ENCODE measurements at regions of chr3 and their contacts with region 1.

Region 1: DNA sequence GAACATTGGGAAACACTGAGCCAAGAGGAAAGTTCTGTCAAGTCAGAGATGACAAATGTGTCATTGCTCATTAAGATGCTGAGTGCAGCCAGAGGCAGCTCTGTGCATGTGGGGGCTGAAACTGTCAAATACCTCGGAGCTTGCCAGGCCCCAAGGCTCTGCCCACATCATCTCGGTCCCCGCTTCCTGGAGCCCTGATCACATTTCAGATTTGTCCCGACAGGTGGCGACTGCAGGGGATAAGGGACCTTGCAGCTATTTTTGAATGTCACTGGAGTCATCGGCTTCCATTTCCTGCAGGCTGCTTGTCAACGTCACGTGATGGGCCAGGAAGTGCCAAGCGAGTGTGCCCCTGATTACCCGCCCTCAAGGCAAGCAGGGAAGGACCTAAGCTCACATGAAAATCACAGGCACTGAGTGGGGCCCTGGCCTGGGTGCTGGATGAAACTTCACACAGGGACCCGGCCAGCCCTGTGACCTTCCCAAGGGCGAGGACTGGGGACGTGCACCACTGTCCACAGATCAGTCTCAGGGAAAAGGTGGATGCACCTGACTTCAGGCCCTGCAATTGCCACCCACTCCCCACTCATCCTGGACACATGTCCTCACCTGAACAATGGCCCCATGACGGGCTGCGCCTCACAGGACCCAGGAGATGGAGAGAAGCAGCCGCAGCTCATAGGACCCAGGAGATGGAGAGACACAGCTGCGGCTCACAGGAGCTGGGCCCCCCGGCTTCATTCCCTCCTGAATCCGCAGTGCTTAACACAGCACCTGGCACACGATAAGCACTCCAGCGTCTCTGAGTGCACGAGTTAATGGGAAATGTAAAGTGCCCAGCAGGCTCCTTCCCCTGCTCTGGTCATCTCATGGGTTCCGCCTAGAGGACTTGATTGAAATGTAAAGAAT is 73.4 kb downstream of the NUP210 start:
- DNase-seq: peak; percentile 78 to 88 (median 82)
- H3K4me3 ChIP-seq: no peak overlapping the region
- H3K4me3 Mint-ChIP-seq: peak overlapping the region in 7 of 8 donors; percentile 48 to 72 (median 63)
- H3K27ac ChIP-seq: peak overlapping the region; percentile 47
- H3K27ac Mint-ChIP-seq: peak overlapping the region; percentile 88 to 94 (median 90)
- H3K4me1 ChIP-seq: peaks cover 46% of the 10 kb centered on the region
- H3K4me1 Mint-ChIP-seq: peaks cover 34 to 56% (median 41%) of the 10 kb centered on the region in 4 donors
- H3K27me3 ChIP-seq: no peaks in the 10 kb centered on the region
- H3K27me3 Mint-ChIP-seq: no peaks in the 10 kb centered on the region

Region 2: DNA sequence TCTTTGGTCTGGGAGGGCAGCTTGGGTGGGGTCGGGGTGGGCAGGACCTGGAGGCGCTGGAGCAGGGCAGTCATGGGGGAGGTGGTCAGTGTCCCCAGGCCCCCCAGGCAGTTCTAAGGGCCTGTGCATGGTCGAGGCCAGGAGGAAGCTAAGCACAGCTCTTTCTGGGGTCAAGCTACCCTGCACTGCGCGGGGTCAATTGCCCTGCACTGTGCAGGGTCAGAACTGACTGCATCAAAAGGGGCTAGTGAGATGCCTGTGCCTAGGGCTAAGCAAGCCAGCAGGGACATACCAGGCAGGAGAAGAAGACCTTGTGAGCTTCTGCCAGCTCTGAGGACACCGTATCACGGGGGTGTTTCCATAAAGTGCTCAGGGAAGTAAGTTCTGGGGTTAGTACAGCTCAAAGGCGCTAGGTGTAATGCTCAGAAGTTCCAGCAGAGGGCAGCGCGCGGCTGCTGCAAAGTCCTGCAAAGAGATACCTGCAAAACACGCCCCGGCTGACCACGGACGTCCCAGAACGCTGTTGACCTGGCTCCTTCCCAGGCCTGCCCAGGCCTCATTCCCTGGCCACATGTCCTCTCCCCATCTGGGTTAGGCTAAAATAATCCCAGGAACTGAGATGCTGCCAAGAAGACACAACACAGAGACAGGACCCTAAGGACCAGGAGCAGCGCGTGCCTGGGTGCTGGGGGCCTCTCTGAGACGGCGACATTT is 254.7 kb before region 1 on chr3:
- CTCF ChIA-PET with region 1: interaction called, 9 read pairs
- POLR2A ChIA-PET with region 1: no interaction called
- intact Hi-C with region 1: loop called (anchors 1 kb)
- DNase-seq: peak; percentile 67 to 77 (median 71)
- H3K4me3 ChIP-seq: no peak overlapping the region
- H3K4me3 Mint-ChIP-seq: peak overlapping the region in 1 of 8 donors; percentile 60
- H3K27ac ChIP-seq: no peak overlapping the region
- H3K27ac Mint-ChIP-seq: no peak overlapping the region
- H3K4me1 ChIP-seq: peaks cover 6% of the 10 kb centered on the region
- H3K4me1 Mint-ChIP-seq: peaks cover 4 to 6% (median 5%) of the 10 kb centered on the region in 4 donors
- H3K27me3 ChIP-seq: no peaks in the 10 kb centered on the region
- H3K27me3 Mint-ChIP-seq: peaks cover 3 to 9% of the 10 kb centered on the region in 2 donors

Region 3: DNA sequence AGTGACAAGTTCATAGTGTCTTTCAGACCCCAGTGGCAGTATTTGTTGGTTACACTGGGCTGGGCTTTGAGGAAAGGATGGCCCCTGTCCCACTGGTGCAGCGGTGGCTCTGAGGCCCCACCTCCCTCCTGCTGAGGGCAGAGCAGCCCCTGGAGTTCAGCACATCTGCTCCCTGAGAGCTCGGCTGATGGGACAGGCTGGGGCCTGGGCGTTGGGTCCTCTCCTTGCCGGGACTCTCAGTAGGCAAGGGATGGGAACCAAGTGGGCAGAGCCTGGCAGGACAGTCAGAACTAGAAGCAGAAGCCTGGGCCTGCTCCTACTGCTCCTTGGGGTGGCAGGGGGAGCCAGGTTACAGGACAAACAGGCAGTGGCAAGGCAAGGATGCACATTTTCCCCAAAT is 41.1 kb before region 1 on chr3:
- CTCF ChIA-PET with region 1: no interaction called
- POLR2A ChIA-PET with region 1: no interaction called
- intact Hi-C with region 1: no loop called
- DNase-seq: no peak
- H3K4me3 ChIP-seq: no peak overlapping the region
- H3K4me3 Mint-ChIP-seq: no peak overlapping the region
- H3K27ac ChIP-seq: no peak overlapping the region
- H3K27ac Mint-ChIP-seq: peak overlapping the region in 1 of 7 donors; percentile 72
- H3K4me1 ChIP-seq: no peaks in the 10 kb centered on the region
- H3K4me1 Mint-ChIP-seq: peaks cover 5 to 6% (median 6%) of the 10 kb centered on the region in 4 donors
- H3K27me3 ChIP-seq: no peaks in the 10 kb centered on the region
- H3K27me3 Mint-ChIP-seq: peaks cover 2 to 3% of the 10 kb centered on the region in 2 donors

Region 4: GRCh38 chr3:13372126-13372525 is 25.4 kb after region 1 on chr3:
- CTCF ChIA-PET with region 1: no interaction called
- POLR2A ChIA-PET with region 1: no interaction called
- intact Hi-C with region 1: no loop called
- DNase-seq: no peak
- H3K4me3 ChIP-seq: no peak overlapping the region
- H3K4me3 Mint-ChIP-seq: no peak overlapping the region
- H3K27ac ChIP-seq: no peak overlapping the region
- H3K27ac Mint-ChIP-seq: peak overlapping the region in 6 of 7 donors; percentile 13 to 77 (median 46)
- H3K4me1 ChIP-seq: no peaks in the 10 kb centered on the region
- H3K4me1 Mint-ChIP-seq: peaks cover 0 to 2% (median under 1%) of the 10 kb centered on the region in 4 donors
- H3K27me3 ChIP-seq: no peaks in the 10 kb centered on the region
- H3K27me3 Mint-ChIP-seq: no peaks in the 10 kb centered on the region

Region 5: GRCh38 chr3:13385373-13385965 is 38.7 kb after region 1 on chr3:
- CTCF ChIA-PET with region 1: interaction called, 19 read pairs
- POLR2A ChIA-PET with region 1: no interaction called
- intact Hi-C with region 1: loop called (anchors 5 kb)
- DNase-seq: no peak
- H3K4me3 ChIP-seq: no peak overlapping the region
- H3K4me3 Mint-ChIP-seq: peak overlapping the region in 2 of 8 donors; percentile 5 to 29
- H3K27ac ChIP-seq: no peak overlapping the region
- H3K27ac Mint-ChIP-seq: peak overlapping the region in 6 of 7 donors; percentile 1 to 78 (median 64)
- H3K4me1 ChIP-seq: peaks cover 8% of the 10 kb centered on the region
- H3K4me1 Mint-ChIP-seq: peaks cover 11 to 27% (median 16%) of the 10 kb centered on the region in 4 donors
- H3K27me3 ChIP-seq: no peaks in the 10 kb centered on the region
- H3K27me3 Mint-ChIP-seq: no peaks in the 10 kb centered on the region

Region 6: DNA sequence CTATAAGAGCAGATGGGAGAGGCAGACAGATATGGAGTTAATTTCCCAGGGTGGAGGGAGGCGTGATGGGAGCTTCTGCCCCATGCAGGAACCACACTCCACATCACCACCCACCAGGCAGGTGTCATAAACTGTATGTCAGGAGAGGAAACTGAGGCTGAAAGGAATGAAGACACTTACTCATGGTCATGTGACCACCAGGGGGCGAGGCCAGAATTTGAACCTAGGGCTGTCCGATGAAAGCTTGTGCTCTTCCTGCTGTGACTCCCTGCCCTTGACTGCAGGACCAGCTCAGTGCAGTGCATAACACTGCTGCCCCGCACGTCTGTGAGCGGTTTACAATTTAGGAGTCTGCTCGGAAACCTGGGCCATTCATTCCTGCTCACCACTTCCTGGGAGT is 44.6 kb after region 1 on chr3:
- CTCF ChIA-PET with region 1: interaction called, 19 read pairs
- POLR2A ChIA-PET with region 1: interaction called, 3 read pairs
- intact Hi-C with region 1: loop called (anchors 5 kb)
- DNase-seq: peak in 4 of 5 donors; percentile 19 to 28 (median 22)
- H3K4me3 ChIP-seq: no peak overlapping the region
- H3K4me3 Mint-ChIP-seq: no peak overlapping the region
- H3K27ac ChIP-seq: no peak overlapping the region
- H3K27ac Mint-ChIP-seq: peak overlapping the region in 6 of 7 donors; percentile 30 to 92 (median 65)
- H3K4me1 ChIP-seq: peaks cover 3% of the 10 kb centered on the region
- H3K4me1 Mint-ChIP-seq: peaks cover 8 to 30% (median 15%) of the 10 kb centered on the region in 4 donors
- H3K27me3 ChIP-seq: no peaks in the 10 kb centered on the region
- H3K27me3 Mint-ChIP-seq: no peaks in the 10 kb centered on the region

Region 7: GRCh38 chr3:13414040-13414729 is 67.5 kb after region 1 on chr3:
- CTCF ChIA-PET with region 1: interaction called, 39 read pairs
- POLR2A ChIA-PET with region 1: interaction called, 72 read pairs
- intact Hi-C with region 1: loop called (anchors 1 kb)
- DNase-seq: peak; percentile 75 to 86 (median 78)
- H3K4me3 ChIP-seq: peak overlapping the region; percentile 26 to 58
- H3K4me3 Mint-ChIP-seq: peak overlapping the region; percentile 78 to 96 (median 87)
- H3K27ac ChIP-seq: peak overlapping the region; percentile 90
- H3K27ac Mint-ChIP-seq: peak overlapping the region; percentile 94 to 99 (median 97)
- H3K4me1 ChIP-seq: peaks cover 72% of the 10 kb centered on the region
- H3K4me1 Mint-ChIP-seq: peaks cover 47 to 70% (median 57%) of the 10 kb centered on the region in 4 donors
- H3K27me3 ChIP-seq: no peaks in the 10 kb centered on the region
- H3K27me3 Mint-ChIP-seq: no peaks in the 10 kb centered on the region

Region 8: DNA sequence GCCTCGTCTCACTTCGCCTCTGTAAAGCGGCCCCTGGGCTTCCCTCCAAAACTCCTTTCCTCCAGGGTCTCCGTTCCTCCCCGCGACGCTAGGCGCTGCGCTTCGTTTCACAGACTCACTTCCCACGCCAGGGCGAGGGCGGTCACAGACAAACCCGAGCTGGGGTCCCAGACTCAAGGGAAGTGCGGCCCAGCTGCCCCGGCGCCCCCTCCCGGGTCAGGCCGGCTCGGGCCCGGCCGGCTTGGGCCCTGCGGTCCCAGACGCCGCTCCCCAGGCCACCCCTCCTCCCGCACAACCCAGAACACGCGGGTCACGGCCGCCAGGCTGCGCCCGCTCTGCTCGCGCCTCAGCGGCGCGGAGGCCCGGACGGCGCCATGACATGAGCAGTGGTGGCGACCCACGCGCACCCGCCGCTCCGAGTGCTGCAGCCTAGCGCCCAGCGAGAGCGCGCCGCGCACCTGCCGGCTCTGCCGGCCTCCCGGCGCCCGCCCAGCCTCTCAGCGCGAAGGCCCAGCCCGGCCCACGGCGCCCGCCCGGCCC is 72.8 kb after region 1 on chr3:
- CTCF ChIA-PET with region 1: interaction called, 39 read pairs
- POLR2A ChIA-PET with region 1: interaction called, 72 read pairs
- intact Hi-C with region 1: loop called (anchors 1 kb)
- DNase-seq: peak in 4 of 5 donors; percentile 59 to 67 (median 66)
- H3K4me3 ChIP-seq: peak overlapping the region; percentile 55 to 84
- H3K4me3 Mint-ChIP-seq: peak overlapping the region; percentile 91 to 96 (median 94)
- H3K27ac ChIP-seq: peak overlapping the region; percentile 90
- H3K27ac Mint-ChIP-seq: peak overlapping the region; percentile 94 to 99 (median 97)
- H3K4me1 ChIP-seq: peaks cover 74% of the 10 kb centered on the region
- H3K4me1 Mint-ChIP-seq: peaks cover 45 to 85% (median 62%) of the 10 kb centered on the region in 4 donors
- H3K27me3 ChIP-seq: no peaks in the 10 kb centered on the region
- H3K27me3 Mint-ChIP-seq: no peaks in the 10 kb centered on the region

Region 9: DNA sequence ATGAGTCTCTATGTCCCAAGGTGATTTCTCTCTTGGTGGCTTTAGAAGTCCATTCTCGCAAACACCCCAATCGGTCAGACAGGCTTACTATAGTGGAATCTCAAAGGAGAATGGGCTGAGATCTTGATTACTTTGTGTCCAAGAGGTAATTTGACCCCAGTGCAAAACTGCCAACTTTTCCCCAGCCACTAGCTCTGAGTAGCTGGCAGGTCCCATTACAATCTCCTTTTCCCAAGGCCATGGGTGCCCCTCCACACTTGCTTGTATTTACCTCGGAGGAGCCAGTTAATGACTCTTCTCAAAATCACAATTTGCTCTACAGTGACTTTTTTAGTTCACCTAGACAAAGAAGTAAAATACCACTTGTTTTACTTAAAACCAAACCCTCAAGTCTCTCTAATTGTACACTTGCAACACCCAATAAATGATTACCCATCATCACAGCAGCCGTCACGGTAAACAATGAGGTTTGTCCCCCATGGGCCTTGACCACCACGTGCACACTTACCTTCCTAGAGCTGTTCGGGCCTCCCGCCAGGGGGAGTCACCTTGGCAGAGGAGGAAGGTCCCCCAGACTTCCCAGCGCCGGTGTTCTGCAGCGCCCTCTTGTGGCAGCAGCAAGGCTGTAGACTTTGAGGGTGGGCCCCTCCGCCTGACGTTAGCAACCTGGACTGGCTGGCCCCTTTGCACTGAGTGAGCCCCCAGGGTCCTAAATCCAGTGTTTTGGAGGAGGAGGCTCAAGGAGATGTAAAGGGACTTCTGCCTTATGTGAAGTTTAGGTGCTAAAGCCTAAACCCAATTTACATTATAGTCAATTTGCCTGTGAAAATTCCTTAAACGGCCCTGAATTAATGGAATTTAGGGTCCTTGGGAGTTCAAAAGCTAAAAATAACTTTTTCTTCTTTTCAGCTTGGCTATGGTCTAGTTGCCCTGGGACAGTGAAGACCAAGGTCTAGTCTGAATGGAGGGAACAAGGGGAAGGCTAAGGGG is 114.7 kb after region 1 on chr3:
- CTCF ChIA-PET with region 1: interaction called, 255 read pairs
- POLR2A ChIA-PET with region 1: interaction called, 3 read pairs
- intact Hi-C with region 1: no loop called
- DNase-seq: peak; percentile 53 to 75 (median 73)
- H3K4me3 ChIP-seq: no peak overlapping the region
- H3K4me3 Mint-ChIP-seq: peak overlapping the region in 1 of 8 donors; percentile 36
- H3K27ac ChIP-seq: no peak overlapping the region
- H3K27ac Mint-ChIP-seq: peak overlapping the region in 1 of 7 donors; percentile 80
- H3K4me1 ChIP-seq: peaks cover 4% of the 10 kb centered on the region
- H3K4me1 Mint-ChIP-seq: peaks cover 0 to 4% (median 2%) of the 10 kb centered on the region in 4 donors
- H3K27me3 ChIP-seq: no peaks in the 10 kb centered on the region
- H3K27me3 Mint-ChIP-seq: peaks cover 3 to 8% of the 10 kb centered on the region in 2 donors

Measured in CD4-positive, alpha-beta memory T cell (primary cell).